PC-9 (cell line): ENCODE measurements at regions of chr11 and their contacts with region 1.

Region 1: GRCh38 chr11:76872959-76873827 is 12.5 kb downstream of the ACER3 start:
- DNase-seq: no peak
- H3K4me3 ChIP-seq: no peak overlapping the region
- H3K27ac ChIP-seq: no peak overlapping the region
- H3K4me1 ChIP-seq: 0 out of 2 replicates have a peak, but pooled peaks cover 3% of the 10 kb centered on the region
- H3K27me3 ChIP-seq: no peaks in the 10 kb centered on the region
- CTCF ChIP-seq: no peak

Region 2: DNA sequence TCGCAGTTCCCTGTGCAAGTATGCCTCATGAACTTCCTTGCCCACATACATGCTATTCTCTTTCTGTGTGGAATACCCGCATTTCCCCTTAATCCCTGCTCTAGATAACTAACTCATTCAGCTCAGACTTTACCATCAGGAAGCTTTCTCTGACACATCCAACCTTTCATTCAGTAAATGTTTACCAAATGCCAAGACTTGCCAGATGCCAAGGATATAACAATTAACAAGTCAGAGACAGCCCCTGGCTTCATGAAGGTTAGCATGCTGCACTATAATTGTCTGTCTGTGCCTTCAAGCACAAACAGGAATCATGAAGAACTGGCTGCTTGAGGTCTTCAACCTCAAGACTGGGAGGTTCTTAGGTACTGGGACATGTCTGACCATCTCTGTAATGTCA is 499.5 kb after region 1 on chr11:
- CTCF ChIA-PET with region 1: no interaction called
- POLR2A ChIA-PET with region 1: interaction called, 11 read pairs
- intact Hi-C with region 1: no loop called
- DNase-seq: no peak
- H3K4me3 ChIP-seq: no peak overlapping the region
- H3K27ac ChIP-seq: no peak overlapping the region
- H3K4me1 ChIP-seq: peaks cover 12% of the 10 kb centered on the region; the same call in 1 of the 2 replicates
- H3K27me3 ChIP-seq: no peaks in the 10 kb centered on the region
- CTCF ChIP-seq: no peak